AG04449 (cell line): ENCODE measurements at regions of chr1 and their contacts with region 1.

Region 1: GRCh38 chr1:224513787-224514209 is 79.2 kb upstream of the WDR26 start:
- DNase-seq: no peak
- H3K4me3 ChIP-seq: no peak overlapping the region
- CTCF ChIP-seq: peak; percentile 97

Region 2: DNA sequence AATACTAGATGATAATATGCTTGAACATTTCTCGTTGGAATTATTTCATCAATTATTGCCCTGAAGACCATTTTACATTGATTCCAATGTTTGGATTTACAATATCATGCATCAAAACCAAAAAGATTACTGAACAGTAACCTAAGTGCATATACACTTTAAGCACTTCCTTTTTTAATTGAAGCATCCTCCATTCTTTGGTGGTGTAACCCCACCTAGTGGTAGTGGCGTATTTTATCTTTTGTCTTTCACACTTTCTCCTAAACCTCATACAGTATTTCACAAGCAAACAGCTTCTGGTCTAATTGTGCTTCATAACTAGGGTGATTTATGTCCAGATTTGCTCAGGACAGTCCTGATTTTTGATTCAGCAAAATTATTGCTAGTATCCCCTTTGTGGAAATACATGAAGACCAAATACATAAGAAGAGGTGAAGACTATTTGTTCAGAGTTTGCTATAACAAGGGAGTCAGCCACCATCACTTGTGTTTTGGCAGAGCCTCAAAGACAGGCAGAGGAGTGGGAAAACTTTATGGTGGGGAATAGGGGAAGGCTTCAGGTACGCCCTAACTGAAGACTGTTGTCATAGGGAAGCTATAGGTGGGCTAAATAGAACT is 180.4 kb before region 1 on chr1:
- CTCF ChIA-PET with region 1: no interaction called
- POLR2A ChIA-PET with region 1: no interaction called
- DNase-seq: no peak
- H3K4me3 ChIP-seq: no peak overlapping the region
- CTCF ChIP-seq: peak; percentile 33

Region 3: GRCh38 chr1:224528900-224529299 is 15.1 kb after region 1 on chr1:
- CTCF ChIA-PET with region 1: interaction called, 91 read pairs
- POLR2A ChIA-PET with region 1: no interaction called
- DNase-seq: no peak
- H3K4me3 ChIP-seq: no peak overlapping the region
- CTCF ChIP-seq: no peak

Region 4: DNA sequence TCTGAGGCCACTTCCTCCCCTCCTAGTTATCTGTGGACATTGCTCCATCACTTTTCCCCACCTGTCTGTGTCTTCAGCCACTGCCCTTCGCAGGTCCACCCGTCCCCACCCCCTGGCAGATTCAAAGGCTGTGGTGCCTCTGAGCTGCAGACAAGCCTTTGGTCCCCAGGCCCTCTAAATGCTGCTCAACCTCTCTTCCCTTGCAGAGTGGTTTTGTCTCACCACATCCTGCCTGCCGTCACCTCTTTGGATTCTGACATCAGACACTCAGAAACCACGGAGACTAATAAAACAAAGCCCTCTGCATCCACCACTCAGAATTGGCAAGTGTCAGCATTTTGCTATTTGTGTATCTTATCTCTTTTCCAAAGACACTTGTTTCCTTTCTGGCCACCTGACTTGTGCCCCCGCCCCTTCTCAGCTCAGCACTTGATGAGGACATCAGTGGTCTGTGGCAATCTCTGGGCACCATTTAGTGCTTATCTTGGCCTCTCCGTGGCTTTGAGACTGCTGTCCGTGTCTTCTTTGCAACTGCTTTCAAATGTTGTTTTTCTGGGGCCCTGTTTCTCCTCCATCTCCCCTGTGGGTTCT is 110.0 kb after region 1 on chr1:
- CTCF ChIA-PET with region 1: interaction called, 32 read pairs
- POLR2A ChIA-PET with region 1: no interaction called
- DNase-seq: peak; percentile 58
- H3K4me3 ChIP-seq: no peak overlapping the region; the same call in 1 of the 2 replicates
- CTCF ChIP-seq: no peak

Region 5: DNA sequence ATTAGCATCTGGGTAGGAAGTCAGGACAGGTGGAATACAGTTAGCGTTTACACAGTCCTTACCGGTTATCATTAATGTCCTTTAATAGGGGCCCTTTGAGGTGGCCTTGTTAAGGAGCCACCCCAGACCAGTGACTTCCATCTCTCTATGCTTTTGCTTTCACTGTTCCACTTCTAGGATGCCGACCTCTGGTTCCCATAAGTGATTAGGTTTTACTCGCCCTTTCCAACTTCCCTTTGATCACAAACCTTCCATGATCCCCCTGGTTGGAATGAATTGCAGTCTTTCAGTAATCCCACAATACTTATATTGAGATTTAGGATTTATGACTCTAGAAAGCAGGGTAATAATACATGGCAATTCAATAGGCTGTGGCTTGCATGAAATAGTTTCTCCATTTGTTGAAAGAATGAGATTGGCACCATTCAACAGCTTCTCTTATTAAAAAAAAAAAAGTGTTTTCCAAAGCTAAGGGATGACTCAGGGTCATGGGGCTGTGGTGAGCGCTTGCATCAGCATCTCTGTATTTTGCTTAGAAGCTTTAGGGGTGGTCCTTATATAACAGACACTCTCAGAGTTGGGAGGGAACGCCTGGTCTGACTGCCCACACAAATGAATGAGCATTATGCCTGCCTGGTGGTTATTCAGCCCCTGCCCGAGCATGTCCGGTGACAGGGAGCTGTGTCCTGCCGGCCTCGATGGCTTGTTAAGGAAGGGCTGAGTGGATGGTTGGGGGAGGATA is 212.8 kb after region 1 on chr1:
- CTCF ChIA-PET with region 1: interaction called, 12 read pairs
- POLR2A ChIA-PET with region 1: interaction called, 4 read pairs
- DNase-seq: peak; percentile 81
- H3K4me3 ChIP-seq: no peak overlapping the region
- CTCF ChIP-seq: no peak

Region 6: GRCh38 chr1:224879162-224879803 is 365.5 kb after region 1 on chr1:
- CTCF ChIA-PET with region 1: interaction called, 17 read pairs
- POLR2A ChIA-PET with region 1: no interaction called
- DNase-seq: no peak
- H3K4me3 ChIP-seq: no peak overlapping the region
- CTCF ChIP-seq: no peak

Region 7: DNA sequence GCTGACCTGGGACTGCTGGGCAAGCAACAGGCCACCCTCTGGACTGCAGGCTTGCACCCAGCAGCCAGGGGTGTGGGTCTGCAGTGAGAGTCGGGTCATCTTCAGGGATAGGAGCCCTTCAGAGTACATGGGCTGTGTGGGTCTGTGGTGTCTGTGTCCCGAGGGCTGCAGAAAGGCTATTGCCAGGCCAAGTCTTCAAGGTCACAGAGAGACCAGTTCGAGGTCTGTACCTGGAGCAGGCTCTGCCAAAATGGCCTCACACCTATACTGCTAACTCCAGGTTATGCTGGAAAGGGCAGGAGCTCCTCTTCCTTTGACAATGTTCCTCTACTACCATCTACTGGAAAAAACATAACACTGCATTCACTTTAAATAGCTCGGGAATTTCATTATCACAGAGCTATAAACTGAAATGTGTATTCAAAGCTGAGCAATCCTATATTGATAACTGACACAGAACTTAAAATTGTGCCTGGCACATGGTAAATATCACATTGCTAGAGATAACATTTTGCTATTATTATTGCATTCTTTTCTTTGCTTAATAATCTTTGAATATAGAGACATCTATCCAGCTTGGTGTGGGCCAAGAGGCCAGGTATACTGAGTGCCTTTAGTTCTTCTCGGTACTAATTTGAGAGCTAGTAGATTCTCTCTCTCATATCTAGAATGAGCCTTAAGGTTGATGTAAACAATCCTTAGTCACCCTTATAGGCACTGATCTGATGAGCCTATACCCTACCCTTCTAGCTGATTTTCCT is 408.8 kb after region 1 on chr1:
- CTCF ChIA-PET with region 1: interaction called, 127 read pairs
- POLR2A ChIA-PET with region 1: no interaction called
- DNase-seq: no peak
- H3K4me3 ChIP-seq: no peak overlapping the region
- CTCF ChIP-seq: peak; percentile 56